Activated CD4-positive, alpha-beta memory T cell treated with anti-CD3 and anti-CD28 coated beads for 36 hours (primary cell): ENCODE measurements at regions of chr7 and their contacts with region 1.

Region 1: DNA sequence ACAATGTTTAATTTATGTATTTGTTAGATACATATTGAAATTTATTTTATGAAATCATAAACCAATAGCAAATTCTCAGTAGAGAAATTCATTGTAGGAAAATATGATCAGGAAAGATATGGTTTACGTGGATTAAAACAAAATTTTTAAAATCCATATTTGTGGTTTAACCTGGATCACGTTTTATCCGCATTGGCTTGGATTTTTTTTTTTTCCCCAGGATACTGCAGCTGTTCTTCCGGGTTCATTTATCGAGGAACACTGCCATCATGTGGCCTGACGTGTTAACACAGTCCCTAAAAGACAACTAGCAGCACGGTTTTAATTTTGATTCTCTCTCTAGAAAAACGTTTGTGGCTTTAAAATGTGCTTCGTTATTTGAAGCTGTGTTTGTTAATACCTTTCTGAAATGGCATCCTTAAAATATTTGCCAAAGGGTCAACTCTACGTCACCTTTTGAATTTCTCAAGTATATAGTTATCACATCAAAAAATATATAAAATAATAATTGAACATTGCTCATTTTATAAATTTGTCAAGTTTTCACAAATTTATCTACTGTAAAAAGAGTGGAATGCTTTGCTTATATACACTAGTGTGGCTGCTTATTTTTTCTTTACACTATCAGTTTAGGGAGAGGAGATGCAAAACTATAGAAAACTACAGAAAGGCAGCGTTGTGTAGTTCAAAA is 8.7 kb upstream of the ASB4 start:
- DNase-seq: peak; percentile 62
- H3K4me3 Mint-ChIP-seq: no peak overlapping the region
- H3K27ac Mint-ChIP-seq: no peak overlapping the region
- H3K4me1 Mint-ChIP-seq: no peaks in the 10 kb centered on the region
- H3K27me3 Mint-ChIP-seq: peaks cover 6% of the 10 kb centered on the region

Region 2: DNA sequence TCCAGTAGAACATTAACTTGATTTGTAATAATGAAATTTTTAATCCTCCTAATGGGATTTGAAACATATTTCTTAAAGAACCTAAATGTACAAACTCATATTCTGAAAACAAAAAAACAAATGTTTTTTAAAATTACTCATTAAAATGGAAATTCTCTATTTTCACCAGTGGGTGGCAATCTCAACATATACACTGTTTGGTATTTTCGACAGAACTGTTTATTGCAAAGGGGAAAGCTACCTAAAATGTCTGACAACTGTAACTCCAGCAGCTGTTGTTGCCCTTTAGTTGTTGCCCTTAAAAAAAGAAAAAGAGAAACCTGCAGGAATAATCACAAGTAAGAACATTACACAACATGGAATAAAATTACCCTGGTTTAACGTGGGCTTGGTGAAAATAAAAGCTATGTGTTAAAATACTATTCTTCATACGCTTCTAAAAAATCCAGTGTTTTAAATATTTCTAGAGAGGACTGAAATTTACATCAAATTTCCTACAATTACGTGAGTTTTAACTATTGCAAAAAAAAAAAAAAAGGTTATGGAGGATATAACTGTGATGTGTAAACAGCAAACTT is 1027.8 kb before region 1 on chr7:
- CTCF ChIA-PET with region 1: interaction called, 52 read pairs
- POLR2A ChIA-PET with region 1: no interaction called
- intact Hi-C with region 1: loop called (anchors 2 kb)
- DNase-seq: no peak
- H3K4me3 Mint-ChIP-seq: no peak overlapping the region
- H3K27ac Mint-ChIP-seq: no peak overlapping the region
- H3K4me1 Mint-ChIP-seq: no peaks in the 10 kb centered on the region
- H3K27me3 Mint-ChIP-seq: peaks cover 15% of the 10 kb centered on the region

Region 3: GRCh38 chr7:94509879-94510581 is 967.0 kb before region 1 on chr7:
- CTCF ChIA-PET with region 1: no interaction called
- POLR2A ChIA-PET with region 1: no interaction called
- intact Hi-C with region 1: loop called (anchors 10 kb)
- DNase-seq: peak; percentile 71
- H3K4me3 Mint-ChIP-seq: peak overlapping the region; percentile 76
- H3K27ac Mint-ChIP-seq: peak overlapping the region; percentile 91
- H3K4me1 Mint-ChIP-seq: peaks cover 42% of the 10 kb centered on the region
- H3K27me3 Mint-ChIP-seq: no peaks in the 10 kb centered on the region

Region 4: GRCh38 chr7:94657771-94658693 is 819.0 kb before region 1 on chr7:
- CTCF ChIA-PET with region 1: no interaction called
- POLR2A ChIA-PET with region 1: no interaction called
- intact Hi-C with region 1: loop called (anchors 10 kb)
- DNase-seq: peak; percentile 95
- H3K4me3 Mint-ChIP-seq: peak overlapping the region; percentile 85
- H3K27ac Mint-ChIP-seq: no peak overlapping the region
- H3K4me1 Mint-ChIP-seq: peaks cover 12% of the 10 kb centered on the region
- H3K27me3 Mint-ChIP-seq: peaks cover 16% of the 10 kb centered on the region

Region 5: GRCh38 chr7:95246831-95247370 is 230.1 kb before region 1 on chr7:
- CTCF ChIA-PET with region 1: interaction called, 3 read pairs
- POLR2A ChIA-PET with region 1: no interaction called
- intact Hi-C with region 1: loop called (anchors 5 kb)
- DNase-seq: peak; percentile 19
- H3K4me3 Mint-ChIP-seq: no peak overlapping the region
- H3K27ac Mint-ChIP-seq: no peak overlapping the region
- H3K4me1 Mint-ChIP-seq: no peaks in the 10 kb centered on the region
- H3K27me3 Mint-ChIP-seq: peaks cover 4% of the 10 kb centered on the region

Region 6: GRCh38 chr7:95396136-95397032 is 80.7 kb before region 1 on chr7 and contains the start of gene PON3:
- CTCF ChIA-PET with region 1: interaction called, 6 read pairs
- POLR2A ChIA-PET with region 1: no interaction called
- intact Hi-C with region 1: loop called (anchors 10 kb)
- DNase-seq: peak; percentile 30
- H3K4me3 Mint-ChIP-seq: peak within 1 kb of the TSS; percentile 36
- H3K27ac Mint-ChIP-seq: no peak within 1 kb of the TSS
- H3K4me1 Mint-ChIP-seq: no peaks in the 10 kb centered on the region
- H3K27me3 Mint-ChIP-seq: peaks cover 39% of the 10 kb centered on the region
- total RNA-seq, gene PON3: not detected

Region 7: DNA sequence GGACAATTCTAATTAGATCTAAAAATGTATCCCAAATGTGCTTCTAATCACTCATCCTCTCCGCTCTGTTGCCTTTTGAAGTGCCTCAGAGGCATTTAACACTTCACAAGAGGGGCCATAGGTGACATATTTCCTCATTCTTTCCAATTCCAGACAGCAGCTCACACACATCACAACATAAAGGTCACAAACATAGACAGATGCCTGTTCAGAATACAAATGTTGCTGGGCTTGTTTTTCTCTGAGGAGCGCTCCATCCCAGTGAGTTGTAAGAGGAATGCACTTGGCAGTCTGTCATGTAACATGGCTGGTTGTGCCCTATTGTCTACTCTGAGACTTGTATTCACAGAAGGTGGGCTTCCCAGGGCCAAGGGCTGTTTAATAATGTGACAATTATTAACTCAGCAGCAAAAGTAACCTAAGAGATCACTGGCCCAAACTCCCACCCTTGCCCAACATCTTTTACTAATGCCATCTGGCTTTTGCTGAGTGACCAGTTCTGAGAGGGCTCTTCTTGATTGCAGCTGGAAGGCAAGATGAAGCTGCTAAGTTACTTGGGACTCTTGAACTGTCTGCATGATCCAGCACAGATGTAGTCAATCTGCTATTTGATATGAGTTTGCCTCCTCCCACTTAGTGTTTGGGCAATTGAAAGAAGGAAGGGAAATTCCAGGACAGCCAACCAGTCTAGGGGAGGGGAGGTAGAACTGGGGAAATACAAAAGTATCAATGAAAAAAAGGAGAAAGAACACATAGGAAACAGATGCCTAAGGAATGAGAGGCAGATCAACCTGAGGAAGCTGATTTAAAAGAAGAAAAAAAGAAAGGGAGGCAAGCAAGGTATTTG is 55.8 kb before region 1 on chr7:
- CTCF ChIA-PET with region 1: no interaction called
- POLR2A ChIA-PET with region 1: no interaction called
- intact Hi-C with region 1: no loop called
- DNase-seq: no peak
- H3K4me3 Mint-ChIP-seq: no peak overlapping the region
- H3K27ac Mint-ChIP-seq: no peak overlapping the region
- H3K4me1 Mint-ChIP-seq: no peaks in the 10 kb centered on the region
- H3K27me3 Mint-ChIP-seq: peaks cover 1% of the 10 kb centered on the region

Region 8: DNA sequence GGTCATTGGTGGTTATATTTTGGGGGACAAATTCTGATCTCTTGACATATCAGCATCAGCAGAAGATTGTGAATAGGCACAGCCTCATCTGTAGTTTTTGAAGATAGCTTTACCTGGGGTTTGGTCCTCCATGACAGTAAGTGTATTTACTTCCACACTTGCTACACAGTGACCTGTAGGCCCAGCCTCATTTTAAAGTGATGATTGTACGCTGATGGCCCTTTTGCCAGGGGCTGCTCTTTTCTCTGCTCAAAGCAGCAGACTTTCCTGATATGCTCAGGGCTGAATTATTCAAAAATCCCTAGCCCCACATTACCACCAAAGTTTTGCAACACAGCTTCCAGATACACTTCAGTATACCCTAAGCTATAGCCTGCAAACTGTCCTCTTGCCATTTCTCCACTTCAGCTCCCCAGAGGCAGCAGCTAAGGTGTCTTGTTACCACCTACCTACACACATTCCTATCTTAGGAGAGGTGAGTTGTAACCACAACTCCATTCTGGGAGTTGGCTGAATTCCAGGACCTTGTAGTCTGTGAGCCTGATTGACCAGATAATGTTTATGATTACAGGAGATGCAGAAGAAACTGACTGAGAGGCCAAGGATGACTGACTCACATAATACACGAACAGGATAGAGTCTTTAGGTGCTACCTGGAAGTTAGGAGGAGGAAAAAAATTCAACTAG is 14.7 kb after region 1 on chr7:
- CTCF ChIA-PET with region 1: interaction called, 27 read pairs
- POLR2A ChIA-PET with region 1: interaction called, 3 read pairs
- intact Hi-C with region 1: no loop called
- DNase-seq: no peak
- H3K4me3 Mint-ChIP-seq: no peak overlapping the region
- H3K27ac Mint-ChIP-seq: no peak overlapping the region
- H3K4me1 Mint-ChIP-seq: no peaks in the 10 kb centered on the region
- H3K27me3 Mint-ChIP-seq: no peaks in the 10 kb centered on the region